ENCODE measurements at regions of chr3 and their contacts with region 1.

Region 1: DNA sequence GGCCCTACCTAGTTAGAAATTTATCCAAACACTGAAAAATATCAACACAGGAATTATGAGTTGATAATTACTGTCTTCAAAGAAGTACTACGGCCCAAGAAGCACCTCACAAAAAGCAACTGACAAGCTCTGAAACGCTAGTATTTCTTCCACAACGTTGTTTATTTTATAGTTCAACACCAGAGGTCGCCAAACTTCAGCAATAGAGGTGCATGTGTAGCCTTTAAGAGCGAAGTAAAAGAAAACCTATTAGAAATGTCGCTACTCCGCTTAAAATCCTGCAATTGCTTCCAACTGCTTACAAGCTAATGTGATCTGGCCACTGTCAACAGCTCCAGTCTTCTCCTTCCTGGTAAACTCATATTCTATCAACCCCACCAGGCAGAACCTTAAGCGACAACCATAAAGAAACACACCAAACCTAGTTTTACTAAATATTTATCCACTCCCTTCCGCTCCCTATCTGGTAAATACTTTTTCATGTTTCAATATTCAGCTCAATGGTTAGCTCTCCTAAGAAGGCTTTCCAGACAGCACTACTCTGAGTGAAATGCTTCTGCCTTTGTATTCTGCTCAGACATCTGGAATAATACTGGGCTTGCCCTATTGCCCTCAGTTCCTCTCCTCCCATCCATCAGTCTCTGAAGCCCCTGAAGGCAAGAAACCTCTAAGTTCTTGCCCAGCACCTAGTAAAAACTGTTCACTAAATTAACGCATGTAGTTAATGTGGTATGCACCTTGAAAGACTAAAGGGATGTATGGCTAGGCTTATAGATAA is 110.2 kb downstream of the NR1I2 start:
- H3K4me3 Mint-ChIP-seq: no peak overlapping the region
- H3K27ac Mint-ChIP-seq: no peak overlapping the region
- H3K4me1 Mint-ChIP-seq: peaks cover 15% of the 10 kb centered on the region
- H3K27me3 Mint-ChIP-seq: no peaks in the 10 kb centered on the region

Region 2: GRCh38 chr3:119841803-119842477 is 50.2 kb before region 1 on chr3:
- intact Hi-C with region 1: no loop called
- H3K4me3 Mint-ChIP-seq: no peak overlapping the region
- H3K27ac Mint-ChIP-seq: no peak overlapping the region
- H3K4me1 Mint-ChIP-seq: peaks cover 8% of the 10 kb centered on the region
- H3K27me3 Mint-ChIP-seq: no peaks in the 10 kb centered on the region

Region 3: GRCh38 chr3:120052225-120052624 is 160.1 kb after region 1 on chr3:
- intact Hi-C with region 1: no loop called
- H3K4me3 Mint-ChIP-seq: no peak overlapping the region
- H3K27ac Mint-ChIP-seq: no peak overlapping the region
- H3K4me1 Mint-ChIP-seq: peaks cover 43% of the 10 kb centered on the region
- H3K27me3 Mint-ChIP-seq: no peaks in the 10 kb centered on the region

Region 4: DNA sequence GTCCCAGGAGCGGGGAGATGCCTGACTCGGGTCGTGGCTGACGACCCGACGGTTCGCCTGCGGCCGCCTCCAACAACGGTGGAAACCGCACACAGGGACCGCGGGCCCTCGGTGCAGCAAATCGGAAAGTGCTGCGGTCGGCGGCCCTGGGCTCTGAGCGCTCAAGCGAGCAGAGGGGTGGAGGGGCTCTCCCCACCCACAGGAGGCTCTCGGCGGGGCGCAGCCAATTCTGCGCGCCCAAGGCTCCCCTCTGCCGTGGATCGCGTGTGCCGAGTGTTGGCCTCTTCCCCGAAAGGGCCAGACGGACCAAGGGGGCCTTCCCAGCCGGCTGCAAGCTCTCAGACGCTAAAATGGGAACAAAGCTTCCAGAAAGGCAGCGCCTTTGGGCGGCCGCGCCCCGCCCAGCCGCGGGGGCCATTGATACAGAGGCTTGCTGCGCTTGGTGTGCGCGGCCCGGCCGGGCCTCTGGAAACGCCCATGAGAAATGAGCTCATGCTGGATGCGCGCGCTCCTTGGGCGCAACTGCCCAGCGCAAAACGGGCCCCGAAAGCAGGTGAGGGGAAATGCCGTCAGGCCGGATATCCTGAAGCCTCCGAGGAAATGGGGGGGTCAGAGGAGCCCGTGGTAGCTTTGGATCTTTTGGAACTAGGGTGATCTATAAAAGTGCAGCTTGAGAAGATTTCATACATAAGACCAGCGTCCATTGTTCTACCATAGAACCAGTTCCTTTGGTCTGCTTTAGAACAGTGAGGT is 203.3 kb after region 1 on chr3:
- intact Hi-C with region 1: loop called (anchors 5 kb)
- H3K4me3 Mint-ChIP-seq: no peak overlapping the region
- H3K27ac Mint-ChIP-seq: no peak overlapping the region
- H3K4me1 Mint-ChIP-seq: peaks cover 24% of the 10 kb centered on the region
- H3K27me3 Mint-ChIP-seq: no peaks in the 10 kb centered on the region

Region 5: GRCh38 chr3:120182724-120183524 is 290.8 kb after region 1 on chr3:
- intact Hi-C with region 1: loop called (anchors 5 kb)
- H3K4me3 Mint-ChIP-seq: no peak overlapping the region
- H3K27ac Mint-ChIP-seq: no peak overlapping the region
- H3K4me1 Mint-ChIP-seq: no peaks in the 10 kb centered on the region
- H3K27me3 Mint-ChIP-seq: no peaks in the 10 kb centered on the region

Region 6: DNA sequence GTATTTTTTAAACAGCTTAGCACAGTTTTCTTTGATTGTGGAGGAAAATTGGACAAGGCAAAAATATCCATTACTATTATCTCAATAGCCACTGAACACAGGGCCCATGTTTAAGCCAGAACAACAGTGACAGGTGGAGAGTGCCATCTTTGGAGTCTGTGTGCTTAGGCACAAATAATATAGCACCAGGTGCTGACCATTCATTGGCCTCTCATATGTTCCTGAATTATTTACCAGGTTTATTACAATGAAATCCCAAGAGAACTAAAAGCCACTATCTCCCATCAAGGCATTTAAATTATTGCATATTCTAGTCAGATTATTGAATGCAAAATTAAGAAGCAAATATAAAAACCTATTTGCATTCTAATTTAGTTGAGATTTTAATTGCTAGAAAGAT is 353.3 kb after region 1 on chr3:
- intact Hi-C with region 1: loop called (anchors 2 kb)
- H3K4me3 Mint-ChIP-seq: no peak overlapping the region
- H3K27ac Mint-ChIP-seq: no peak overlapping the region
- H3K4me1 Mint-ChIP-seq: peaks cover 5% of the 10 kb centered on the region
- H3K27me3 Mint-ChIP-seq: no peaks in the 10 kb centered on the region

Region 7: DNA sequence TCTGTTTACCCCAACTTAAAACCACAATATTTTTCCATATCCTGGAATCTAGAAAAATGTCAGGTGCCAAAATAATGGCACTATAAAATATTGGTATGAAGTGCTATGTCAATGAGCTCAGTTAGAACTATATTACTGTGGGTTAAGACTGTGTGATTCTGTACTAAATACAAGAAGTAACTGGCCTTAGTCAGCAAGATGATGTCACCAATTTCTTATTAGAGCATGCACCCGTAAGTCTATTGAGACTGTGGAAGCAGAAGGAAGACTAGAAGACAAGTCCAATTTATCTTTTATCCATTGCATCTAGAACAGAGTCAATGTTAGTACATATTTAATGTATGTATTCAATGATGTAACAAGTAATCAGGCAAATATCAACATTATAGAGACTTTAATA is 432.1 kb after region 1 on chr3:
- intact Hi-C with region 1: loop called (anchors 10 kb)
- H3K4me3 Mint-ChIP-seq: no peak overlapping the region
- H3K27ac Mint-ChIP-seq: no peak overlapping the region
- H3K4me1 Mint-ChIP-seq: peaks cover 9% of the 10 kb centered on the region
- H3K27me3 Mint-ChIP-seq: no peaks in the 10 kb centered on the region

Region 8: GRCh38 chr3:120417272-120417911 is 525.3 kb after region 1 on chr3:
- intact Hi-C with region 1: loop called (anchors 2 kb)
- H3K4me3 Mint-ChIP-seq: peak overlapping the region; percentile 65
- H3K27ac Mint-ChIP-seq: peak overlapping the region; percentile 69
- H3K4me1 Mint-ChIP-seq: peaks cover 31% of the 10 kb centered on the region
- H3K27me3 Mint-ChIP-seq: peaks cover 10% of the 10 kb centered on the region

Region 9: DNA sequence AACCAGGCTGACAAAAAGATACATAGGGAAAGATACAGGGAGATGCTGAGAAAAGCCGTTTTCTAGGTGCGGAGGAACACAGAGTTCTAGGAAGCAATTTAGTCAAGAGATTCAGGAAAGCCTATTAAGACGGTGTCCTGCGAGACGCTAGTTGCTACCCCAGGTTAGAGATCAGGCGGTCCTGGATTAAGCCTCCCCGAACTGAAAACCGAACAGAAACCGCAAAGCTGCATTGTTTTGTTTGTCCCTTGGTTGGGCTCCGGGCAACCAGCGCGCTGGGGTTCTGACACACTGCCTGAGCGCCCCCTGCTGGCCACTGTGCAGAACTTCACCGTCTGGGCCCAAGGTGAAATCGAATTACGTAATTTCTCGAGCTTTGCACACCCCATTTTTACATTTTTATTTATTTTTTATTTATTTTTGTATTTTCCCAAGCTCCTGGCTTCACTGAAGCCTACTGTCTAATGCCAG is 666.7 kb after region 1 on chr3:
- intact Hi-C with region 1: loop called (anchors 5 kb)
- H3K4me3 Mint-ChIP-seq: peak overlapping the region; percentile 62
- H3K27ac Mint-ChIP-seq: peak overlapping the region; percentile 66
- H3K4me1 Mint-ChIP-seq: peaks cover 16% of the 10 kb centered on the region
- H3K27me3 Mint-ChIP-seq: peaks cover 5% of the 10 kb centered on the region

Measured in dendritic cell treated with granulocyte-macrophage colony-stimulating factor and Interleukin-4, amounts not matched to agents 40 ng/mL and 50 ng/mL, for 4 days (primary cell).